A549 (cell line): ENCODE measurements at regions of chr3 and their contacts with region 1.

Region 1: GRCh38 chr3:10292505-10293419 is at the start of gene GHRL:
- DNase-seq: no peak
- ATAC-seq: no peak
- H3K4me3 ChIP-seq: no peak within 1 kb of the TSS
- H3K27ac ChIP-seq: no peak within 1 kb of the TSS
- H3K4me1 ChIP-seq: no peaks in the 10 kb centered on the region
- CTCF ChIP-seq: no peak
- EP300 ChIP-seq: no peak
- POLR2A ChIP-seq: no peak
- RAD21 ChIP-seq: no peak
- polyA plus RNA-seq, gene GHRL: not detected in 2 replicates

Region 2: DNA sequence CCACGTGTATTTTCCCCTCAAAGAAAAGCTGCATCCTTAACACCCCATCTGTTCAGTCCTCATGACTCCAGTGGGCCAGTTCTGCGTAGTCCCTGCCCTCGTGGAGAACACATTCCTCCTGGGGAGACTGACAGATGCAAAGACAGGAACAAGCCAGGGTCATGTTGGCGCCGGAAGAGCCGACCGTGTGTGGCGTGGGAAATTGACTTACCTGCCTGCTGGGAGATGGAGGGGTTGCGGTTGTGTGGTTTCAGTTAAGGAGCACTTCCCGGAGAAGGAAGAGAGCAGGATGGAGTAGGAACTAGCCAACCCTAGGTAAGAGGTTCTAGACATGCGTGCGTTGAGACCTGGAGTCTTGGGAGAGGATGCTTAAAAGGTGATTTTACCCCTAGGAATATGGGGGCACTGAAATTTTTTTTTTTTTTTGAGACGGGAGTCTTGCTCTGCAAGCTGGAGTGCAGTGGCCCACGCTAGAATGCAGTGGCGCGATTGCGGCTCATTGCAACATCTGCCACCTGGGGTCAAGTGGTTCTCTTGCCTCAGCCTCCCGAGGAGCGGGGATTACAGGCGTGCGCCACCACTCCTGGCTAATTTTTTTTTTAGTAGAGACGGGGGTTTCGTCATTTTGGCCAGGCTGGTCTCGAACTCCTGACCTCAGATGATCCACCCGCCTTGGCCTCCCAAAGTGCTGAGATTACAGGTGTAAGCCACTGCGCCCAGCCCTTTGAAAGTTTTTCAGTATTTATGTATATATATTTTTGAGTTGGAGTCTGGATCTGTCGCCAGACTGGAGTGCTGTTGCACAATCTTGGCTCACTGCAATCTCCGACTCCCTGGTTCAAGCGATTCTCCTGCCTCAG is 149.8 kb before region 1 on chr3:
- CTCF ChIA-PET with region 1: no interaction called
- POLR2A ChIA-PET with region 1: no interaction called
- DNase-seq: peak; percentile 26 to 35
- ATAC-seq: peak in 1 of 2 experiments; percentile 12; a peak in 3 of 6 replicates
- H3K4me3 ChIP-seq: peak overlapping the region; percentile 87
- H3K27ac ChIP-seq: peak overlapping the region; percentile 90 to 97
- H3K4me1 ChIP-seq: peaks cover 15% of the 10 kb centered on the region
- CTCF ChIP-seq: no peak
- EP300 ChIP-seq: no peak
- POLR2A ChIP-seq: no peak
- RAD21 ChIP-seq: no peak

Region 3: DNA sequence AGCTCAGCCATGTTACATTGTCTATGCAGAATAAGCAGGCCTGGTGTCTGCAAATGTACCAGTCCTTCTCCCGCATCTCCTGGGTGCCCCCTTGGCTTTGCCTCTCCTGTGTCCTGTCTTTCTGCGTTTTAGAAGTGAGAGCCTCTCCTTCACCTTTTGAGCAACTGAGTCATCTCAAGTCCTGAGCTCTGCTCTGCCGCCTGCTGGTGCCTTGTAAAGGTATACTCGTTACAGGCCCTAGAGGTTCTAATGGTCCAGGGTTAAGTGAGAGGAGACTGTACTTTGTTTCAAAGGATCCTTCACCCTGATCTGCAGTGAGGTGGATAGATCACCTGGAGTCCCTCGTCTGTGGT is 12.6 kb before region 1 on chr3:
- CTCF ChIA-PET with region 1: interaction called, 16 read pairs
- POLR2A ChIA-PET with region 1: no interaction called
- DNase-seq: peak in 1 of 2 experiments; percentile 23
- ATAC-seq: peak in 1 of 2 experiments; percentile 65; a peak in 3 of 6 replicates
- H3K4me3 ChIP-seq: no peak overlapping the region
- H3K27ac ChIP-seq: no peak overlapping the region
- H3K4me1 ChIP-seq: no peaks in the 10 kb centered on the region
- CTCF ChIP-seq: no peak
- EP300 ChIP-seq: no peak
- POLR2A ChIP-seq: no peak
- RAD21 ChIP-seq: peak in 1 of 2 experiments; percentile 22; a peak in 1 of 5 replicates